CD8-positive, alpha-beta T cell (primary cell): ENCODE measurements at regions of chr6 and their contacts with region 1.

Region 1: DNA sequence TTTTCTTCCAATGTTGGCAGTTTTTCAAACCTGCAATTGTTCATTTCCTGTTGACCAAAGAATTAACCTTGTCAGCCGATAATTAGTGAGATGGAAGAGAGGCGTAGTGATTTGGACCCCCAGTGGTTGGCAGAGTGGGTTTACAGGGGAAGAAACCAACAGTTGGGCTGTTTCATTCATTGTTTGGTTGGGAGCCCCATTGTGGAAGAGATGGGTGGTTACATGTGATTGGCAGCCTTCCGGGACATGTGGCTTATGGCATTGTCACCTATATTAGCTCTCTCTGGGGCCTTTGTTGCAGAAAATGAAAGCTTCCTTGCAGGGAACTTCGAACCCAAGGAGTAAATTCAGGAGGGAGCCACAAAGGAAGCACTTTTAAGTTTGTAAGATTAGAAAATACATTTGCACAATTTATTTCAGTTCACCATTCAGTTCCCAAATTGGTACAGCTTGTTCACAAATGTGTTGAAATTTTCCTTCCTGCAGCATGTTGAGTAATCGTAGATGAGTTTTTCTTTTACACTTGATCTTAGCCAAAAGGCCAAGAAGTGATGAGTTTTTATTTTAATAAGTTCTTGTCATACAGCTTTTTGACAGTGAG is 50.3 kb upstream of the CDKAL1 start:
- DNase-seq: peak in 2 of 9 experiments; percentile 5 to 7
- ATAC-seq: no peak
- H3K4me3 ChIP-seq: no peak overlapping the region
- H3K4me3 Mint-ChIP-seq: no peak overlapping the region
- H3K27ac ChIP-seq: no peak overlapping the region
- H3K27ac Mint-ChIP-seq: no peak overlapping the region
- H3K4me1 ChIP-seq: no peaks in the 10 kb centered on the region
- H3K4me1 Mint-ChIP-seq: no peaks in the 10 kb centered on the region
- H3K27me3 ChIP-seq: no peaks in the 10 kb centered on the region
- H3K27me3 Mint-ChIP-seq: no peaks in the 10 kb centered on the region
- CTCF ChIP-seq: no peak

Region 2: DNA sequence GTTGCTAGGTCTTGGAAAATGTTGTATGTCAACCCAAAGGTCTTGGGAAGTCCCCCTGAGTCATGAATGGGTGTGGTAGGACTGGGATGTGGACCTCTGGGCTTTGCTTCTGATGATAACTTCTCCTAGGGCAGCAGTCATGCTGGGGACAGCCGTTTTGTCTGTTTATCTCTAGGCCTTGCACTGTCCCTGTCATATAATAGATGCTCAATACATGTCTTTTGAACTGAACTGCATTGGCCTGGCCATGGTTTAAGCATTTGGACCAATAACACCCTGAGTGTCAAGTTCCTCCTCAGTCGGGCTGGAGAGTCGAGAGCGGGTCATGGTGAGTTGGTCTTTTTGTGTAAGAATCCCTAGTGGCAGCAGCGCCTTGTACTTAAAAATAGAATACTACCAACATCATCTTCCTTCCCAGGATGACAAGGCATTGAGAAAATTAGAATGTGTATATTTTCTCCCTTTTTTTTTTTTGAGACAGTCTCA is 39.2 kb before region 1 on chr6:
- CTCF ChIA-PET with region 1: no interaction called
- POLR2A ChIA-PET with region 1: no interaction called
- intact Hi-C with region 1: loop called in 1 of 2 experiments (anchors 5 kb)
- DNase-seq: peak in 1 of 9 experiments; percentile 26
- ATAC-seq: no peak
- H3K4me3 ChIP-seq: no peak overlapping the region
- H3K4me3 Mint-ChIP-seq: no peak overlapping the region
- H3K27ac ChIP-seq: no peak overlapping the region
- H3K27ac Mint-ChIP-seq: no peak overlapping the region
- H3K4me1 ChIP-seq: no peaks in the 10 kb centered on the region
- H3K4me1 Mint-ChIP-seq: peaks cover 37% of the 10 kb centered on the region
- H3K27me3 ChIP-seq: no peaks in the 10 kb centered on the region
- H3K27me3 Mint-ChIP-seq: no peaks in the 10 kb centered on the region
- CTCF ChIP-seq: no peak